PC-3 (cell line): ENCODE measurements at regions of chr6 and their contacts with region 1.

Region 1: GRCh38 chr6:110528101-110528929 is 51.9 kb upstream of the SLC22A16 start:
- DNase-seq: peak; percentile 95
- ATAC-seq: peak; percentile 68
- H3K4me3 ChIP-seq: peak overlapping the region; percentile 10; the same call in 1 of the 2 replicates
- H3K27ac ChIP-seq: peak overlapping the region; percentile 90
- H3K4me1 ChIP-seq: peaks cover 43% of the 10 kb centered on the region
- H3K27me3 ChIP-seq: no peaks in the 10 kb centered on the region
- CTCF ChIP-seq: peak; percentile 80

Region 2: GRCh38 chr6:110484310-110484709 is 44.0 kb before region 1 on chr6:
- CTCF ChIA-PET with region 1: no interaction called
- POLR2A ChIA-PET with region 1: no interaction called
- intact Hi-C with region 1: loop called (anchors 1 kb)
- DNase-seq: peak; percentile 84
- ATAC-seq: peak; percentile 84
- H3K4me3 ChIP-seq: no peak overlapping the region
- H3K27ac ChIP-seq: peak overlapping the region; percentile 71
- H3K4me1 ChIP-seq: peaks cover 17% of the 10 kb centered on the region
- H3K27me3 ChIP-seq: no peaks in the 10 kb centered on the region
- CTCF ChIP-seq: no peak

Region 3: GRCh38 chr6:110512979-110513378 is 15.3 kb before region 1 on chr6:
- CTCF ChIA-PET with region 1: no interaction called
- POLR2A ChIA-PET with region 1: no interaction called
- intact Hi-C with region 1: no loop called
- DNase-seq: peak; percentile 77
- ATAC-seq: no peak
- H3K4me3 ChIP-seq: no peak overlapping the region
- H3K27ac ChIP-seq: no peak overlapping the region
- H3K4me1 ChIP-seq: peaks cover 51% of the 10 kb centered on the region
- H3K27me3 ChIP-seq: no peaks in the 10 kb centered on the region
- CTCF ChIP-seq: no peak

Region 4: GRCh38 chr6:110554966-110555460 is 26.7 kb after region 1 on chr6:
- CTCF ChIA-PET with region 1: no interaction called
- POLR2A ChIA-PET with region 1: no interaction called
- intact Hi-C with region 1: no loop called
- DNase-seq: peak; percentile 27
- ATAC-seq: peak; percentile 40; the same call in 1 of the 2 replicates
- H3K4me3 ChIP-seq: no peak overlapping the region
- H3K27ac ChIP-seq: peak overlapping the region; percentile 75
- H3K4me1 ChIP-seq: no peaks in the 10 kb centered on the region
- H3K27me3 ChIP-seq: no peaks in the 10 kb centered on the region
- CTCF ChIP-seq: no peak

Region 5: DNA sequence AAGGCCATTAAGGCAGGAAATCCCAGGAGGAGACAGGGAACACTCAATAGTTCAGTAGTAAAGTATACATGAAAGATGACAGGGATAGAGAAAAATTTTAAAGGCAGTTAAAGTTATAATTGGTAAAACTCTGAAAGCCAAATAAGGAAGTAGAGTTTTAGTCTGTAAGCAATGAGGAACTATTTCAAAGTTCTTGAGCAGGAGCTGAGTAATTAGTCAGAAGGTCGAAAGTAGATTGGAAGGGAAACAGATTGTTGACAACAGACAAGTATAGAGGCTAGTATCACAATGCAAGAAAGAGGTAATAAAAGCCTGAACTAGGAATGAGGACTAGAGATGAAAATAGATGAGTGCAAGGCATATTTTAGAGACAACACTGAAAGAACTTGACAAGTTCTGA is 136.6 kb after region 1 on chr6:
- CTCF ChIA-PET with region 1: no interaction called
- POLR2A ChIA-PET with region 1: no interaction called
- intact Hi-C with region 1: loop called (anchors 5 kb)
- DNase-seq: peak; percentile 32
- ATAC-seq: peak; percentile 51
- H3K4me3 ChIP-seq: no peak overlapping the region
- H3K27ac ChIP-seq: peak overlapping the region; percentile 34
- H3K4me1 ChIP-seq: peaks cover 41% of the 10 kb centered on the region
- H3K27me3 ChIP-seq: no peaks in the 10 kb centered on the region
- CTCF ChIP-seq: no peak

Region 6: DNA sequence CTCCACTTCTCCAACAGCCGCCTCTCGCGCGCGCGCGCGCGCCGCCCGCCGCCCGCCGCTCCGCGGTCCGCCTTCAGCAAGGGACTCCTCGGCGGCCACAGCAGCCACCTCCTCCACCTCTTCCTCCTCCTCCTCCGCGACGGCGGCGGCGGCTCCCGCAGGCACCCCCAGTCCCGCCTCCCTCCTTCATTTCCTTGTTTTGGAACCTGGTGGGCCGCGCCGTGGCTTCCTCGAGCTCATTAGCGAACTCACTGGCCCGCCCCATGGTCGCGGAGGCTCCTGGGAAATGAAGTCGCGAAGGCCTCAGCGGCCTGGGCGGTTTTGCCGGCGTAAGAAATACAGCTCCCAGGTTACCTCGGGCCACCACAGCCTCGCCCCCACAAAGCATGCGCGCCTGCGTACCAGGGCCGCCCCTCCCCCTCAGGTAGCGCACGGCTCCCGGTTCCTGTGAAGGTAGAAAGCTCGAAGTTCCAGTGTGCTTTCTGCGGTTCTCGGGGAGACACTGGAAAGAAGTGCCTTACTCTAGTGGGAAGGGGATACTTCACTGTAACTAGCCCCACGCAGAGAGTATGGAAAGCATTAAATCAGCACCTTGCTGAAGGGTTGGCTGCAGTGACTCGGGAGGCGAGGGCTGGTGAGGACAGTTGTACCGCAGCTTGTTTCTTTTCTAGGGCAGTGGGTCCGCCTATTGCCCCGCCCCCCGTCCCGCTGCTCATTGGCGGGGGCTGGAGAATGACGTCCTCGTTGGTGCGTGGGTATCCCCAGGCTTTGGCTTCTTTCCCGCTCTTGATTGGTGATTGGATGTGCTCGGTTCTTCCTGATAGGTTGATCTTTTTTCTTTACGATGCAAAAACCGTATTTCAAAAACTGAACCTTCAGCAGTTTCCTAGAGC is 287.1 kb after region 1 on chr6 and contains the start of gene CDK19:
- CTCF ChIA-PET with region 1: no interaction called
- POLR2A ChIA-PET with region 1: no interaction called
- intact Hi-C with region 1: loop called (anchors 2 kb)
- DNase-seq: peak; percentile 96
- ATAC-seq: peak; percentile 87
- H3K4me3 ChIP-seq: peak within 1 kb of the TSS; percentile 94
- H3K27ac ChIP-seq: peak within 1 kb of the TSS; percentile 86
- H3K4me1 ChIP-seq: peaks cover 29% of the 10 kb centered on the region
- H3K27me3 ChIP-seq: no peaks in the 10 kb centered on the region
- CTCF ChIP-seq: no peak
- total RNA-seq, gene CDK19: 4.2 and 5.4 TPM in 2 replicates

Region 7: GRCh38 chr6:110944681-110945151 is 416.4 kb after region 1 on chr6:
- CTCF ChIA-PET with region 1: no interaction called
- POLR2A ChIA-PET with region 1: no interaction called
- intact Hi-C with region 1: loop called (anchors 2 kb)
- DNase-seq: peak; percentile 89
- ATAC-seq: peak; percentile 99
- H3K4me3 ChIP-seq: peak overlapping the region; percentile 23; the same call in 1 of the 2 replicates
- H3K27ac ChIP-seq: peak overlapping the region; percentile 91
- H3K4me1 ChIP-seq: peaks cover 10% of the 10 kb centered on the region
- H3K27me3 ChIP-seq: no peaks in the 10 kb centered on the region
- CTCF ChIP-seq: no peak